Naive thymus-derived CD4-positive, alpha-beta T cell (primary cell): ENCODE measurements at regions of chr6 and their contacts with region 1.

Region 1: DNA sequence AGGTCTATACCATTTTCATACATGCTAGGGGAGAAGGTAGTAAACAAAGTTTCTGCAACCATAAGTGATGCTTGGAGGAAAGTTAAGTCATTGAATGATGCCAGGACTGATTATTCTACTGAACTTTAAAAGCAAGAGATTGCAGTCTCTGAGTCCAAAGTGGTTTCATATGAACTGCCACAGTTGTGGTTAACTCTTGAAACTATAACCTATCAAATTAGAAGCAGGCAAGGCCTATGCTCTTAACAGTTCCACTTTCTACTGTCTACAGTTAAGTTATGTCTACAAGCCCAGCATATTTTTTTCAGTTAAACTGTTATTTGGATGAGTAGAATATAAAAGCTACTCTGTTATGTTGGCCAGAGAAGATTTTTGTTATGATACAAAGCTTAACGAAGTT is 326.5 kb upstream of the RUNX2 start:
- DNase-seq: peak in 3 of 9 donors; percentile 19 to 22 (median 21)
- ATAC-seq: peak; percentile 74
- H3K4me3 ChIP-seq: no peak overlapping the region
- H3K4me3 Mint-ChIP-seq: peak overlapping the region in 5 of 10 donors; percentile 8 to 49 (median 13)
- H3K27ac ChIP-seq: peak overlapping the region; percentile 2
- H3K27ac Mint-ChIP-seq: peak overlapping the region in 7 of 9 donors; percentile 14 to 87 (median 59)
- H3K4me1 ChIP-seq: peaks cover 4 to 7% of the 10 kb centered on the region in 2 donors
- H3K4me1 Mint-ChIP-seq: peaks cover 7 to 36% (median 26%) of the 10 kb centered on the region in 7 donors
- H3K27me3 ChIP-seq: no peaks in the 10 kb centered on the region
- H3K27me3 Mint-ChIP-seq: no peaks in the 10 kb centered on the region

Region 2: GRCh38 chr6:44925100-44925739 is 76.4 kb before region 1 on chr6:
- CTCF ChIA-PET with region 1: no interaction called
- POLR2A ChIA-PET with region 1: no interaction called
- intact Hi-C with region 1: loop called in 1 of 2 experiments (anchors 2 kb)
- DNase-seq: peak in 7 of 9 donors; percentile 33 to 82 (median 64)
- ATAC-seq: peak; percentile 95
- H3K4me3 ChIP-seq: peak overlapping the region; percentile 22
- H3K4me3 Mint-ChIP-seq: peak overlapping the region in 9 of 10 donors; percentile 5 to 60 (median 43)
- H3K27ac ChIP-seq: peak overlapping the region; percentile 67
- H3K27ac Mint-ChIP-seq: peak overlapping the region; percentile 22 to 80 (median 51)
- H3K4me1 ChIP-seq: peaks cover 19 to 35% of the 10 kb centered on the region in 2 donors
- H3K4me1 Mint-ChIP-seq: peaks cover 25 to 63% (median 51%) of the 10 kb centered on the region in 7 donors
- H3K27me3 ChIP-seq: no peaks in the 10 kb centered on the region
- H3K27me3 Mint-ChIP-seq: no peaks in the 10 kb centered on the region

Region 3: GRCh38 chr6:44932651-44933091 is 69.0 kb before region 1 on chr6:
- CTCF ChIA-PET with region 1: no interaction called
- POLR2A ChIA-PET with region 1: no interaction called
- intact Hi-C with region 1: loop called in 1 of 2 experiments (anchors 2 kb)
- DNase-seq: peak in 7 of 9 donors; percentile 46 to 66 (median 58)
- ATAC-seq: peak; percentile 91
- H3K4me3 ChIP-seq: peak overlapping the region; percentile 37
- H3K4me3 Mint-ChIP-seq: peak overlapping the region; percentile 78 to 98 (median 88)
- H3K27ac ChIP-seq: peak overlapping the region; percentile 71
- H3K27ac Mint-ChIP-seq: peak overlapping the region; percentile 92 to 99 (median 96)
- H3K4me1 ChIP-seq: peaks cover 17 to 42% of the 10 kb centered on the region in 2 donors
- H3K4me1 Mint-ChIP-seq: peaks cover 26 to 67% (median 60%) of the 10 kb centered on the region in 7 donors
- H3K27me3 ChIP-seq: no peaks in the 10 kb centered on the region
- H3K27me3 Mint-ChIP-seq: no peaks in the 10 kb centered on the region

Region 4: GRCh38 chr6:45021676-45022075 is 20.0 kb after region 1 on chr6:
- CTCF ChIA-PET with region 1: no interaction called
- POLR2A ChIA-PET with region 1: no interaction called
- intact Hi-C with region 1: loop called in 1 of 2 experiments (anchors 1 kb)
- DNase-seq: peak in 7 of 9 donors; percentile 6 to 55 (median 28)
- ATAC-seq: peak; percentile 67
- H3K4me3 ChIP-seq: no peak overlapping the region
- H3K4me3 Mint-ChIP-seq: peak overlapping the region in 2 of 10 donors; percentile 6 to 7
- H3K27ac ChIP-seq: no peak overlapping the region
- H3K27ac Mint-ChIP-seq: peak overlapping the region in 2 of 9 donors; percentile 23 to 34
- H3K4me1 ChIP-seq: peaks cover 0 to 4% of the 10 kb centered on the region in 2 donors
- H3K4me1 Mint-ChIP-seq: peaks cover 9 to 20% (median 19%) of the 10 kb centered on the region in 7 donors
- H3K27me3 ChIP-seq: no peaks in the 10 kb centered on the region
- H3K27me3 Mint-ChIP-seq: no peaks in the 10 kb centered on the region

Region 5: DNA sequence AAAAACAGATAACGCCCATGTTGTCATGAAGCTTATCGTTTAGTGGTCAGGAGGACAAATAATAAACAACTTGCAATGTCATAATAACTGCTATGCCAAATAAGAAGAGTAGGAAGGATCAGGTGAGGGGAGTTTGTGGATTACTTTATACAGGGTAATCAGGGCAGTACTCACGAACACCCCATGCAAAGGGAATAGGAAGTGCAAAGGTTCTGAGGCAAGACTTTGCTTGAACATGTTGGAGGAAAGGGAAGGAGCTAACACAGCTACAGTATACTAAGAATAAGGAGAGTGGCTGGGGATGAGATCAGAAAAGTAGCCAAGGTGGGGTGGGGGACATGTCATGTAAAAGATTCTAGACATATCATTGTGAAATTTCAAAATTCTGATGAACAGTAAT is 34.4 kb after region 1 on chr6:
- CTCF ChIA-PET with region 1: no interaction called
- POLR2A ChIA-PET with region 1: no interaction called
- intact Hi-C with region 1: no loop called
- DNase-seq: no peak
- ATAC-seq: no peak
- H3K4me3 ChIP-seq: no peak overlapping the region
- H3K4me3 Mint-ChIP-seq: no peak overlapping the region
- H3K27ac ChIP-seq: no peak overlapping the region
- H3K27ac Mint-ChIP-seq: peak overlapping the region in 2 of 9 donors; percentile 5 to 46
- H3K4me1 ChIP-seq: no peaks in the 10 kb centered on the region
- H3K4me1 Mint-ChIP-seq: peaks cover 0 to 12% (median 4%) of the 10 kb centered on the region in 7 donors
- H3K27me3 ChIP-seq: no peaks in the 10 kb centered on the region
- H3K27me3 Mint-ChIP-seq: no peaks in the 10 kb centered on the region

Region 6: GRCh38 chr6:45069091-45069490 is 67.4 kb after region 1 on chr6:
- CTCF ChIA-PET with region 1: no interaction called
- POLR2A ChIA-PET with region 1: no interaction called
- intact Hi-C with region 1: no loop called
- DNase-seq: no peak
- ATAC-seq: no peak
- H3K4me3 ChIP-seq: no peak overlapping the region
- H3K4me3 Mint-ChIP-seq: no peak overlapping the region
- H3K27ac ChIP-seq: no peak overlapping the region
- H3K27ac Mint-ChIP-seq: no peak overlapping the region
- H3K4me1 ChIP-seq: peaks cover 0 to 6% of the 10 kb centered on the region in 2 donors
- H3K4me1 Mint-ChIP-seq: peaks cover 4 to 38% (median 15%) of the 10 kb centered on the region in 7 donors
- H3K27me3 ChIP-seq: no peaks in the 10 kb centered on the region
- H3K27me3 Mint-ChIP-seq: no peaks in the 10 kb centered on the region

Region 7: GRCh38 chr6:45116714-45117410 is 115.2 kb after region 1 on chr6:
- CTCF ChIA-PET with region 1: no interaction called
- POLR2A ChIA-PET with region 1: no interaction called
- intact Hi-C with region 1: loop called in 1 of 2 experiments (anchors 2 kb)
- DNase-seq: no peak
- ATAC-seq: no peak
- H3K4me3 ChIP-seq: no peak overlapping the region
- H3K4me3 Mint-ChIP-seq: peak overlapping the region in 4 of 10 donors; percentile 7 to 28 (median 8)
- H3K27ac ChIP-seq: no peak overlapping the region
- H3K27ac Mint-ChIP-seq: peak overlapping the region in 2 of 9 donors; percentile 6 to 16
- H3K4me1 ChIP-seq: peaks cover 5% of the 10 kb centered on the region in 2 donors
- H3K4me1 Mint-ChIP-seq: peaks cover 10 to 25% (median 21%) of the 10 kb centered on the region in 7 donors
- H3K27me3 ChIP-seq: no peaks in the 10 kb centered on the region
- H3K27me3 Mint-ChIP-seq: no peaks in the 10 kb centered on the region